IMR-90 (cell line): ENCODE measurements at regions of chr22 and their contacts with region 1.

Region 1: DNA sequence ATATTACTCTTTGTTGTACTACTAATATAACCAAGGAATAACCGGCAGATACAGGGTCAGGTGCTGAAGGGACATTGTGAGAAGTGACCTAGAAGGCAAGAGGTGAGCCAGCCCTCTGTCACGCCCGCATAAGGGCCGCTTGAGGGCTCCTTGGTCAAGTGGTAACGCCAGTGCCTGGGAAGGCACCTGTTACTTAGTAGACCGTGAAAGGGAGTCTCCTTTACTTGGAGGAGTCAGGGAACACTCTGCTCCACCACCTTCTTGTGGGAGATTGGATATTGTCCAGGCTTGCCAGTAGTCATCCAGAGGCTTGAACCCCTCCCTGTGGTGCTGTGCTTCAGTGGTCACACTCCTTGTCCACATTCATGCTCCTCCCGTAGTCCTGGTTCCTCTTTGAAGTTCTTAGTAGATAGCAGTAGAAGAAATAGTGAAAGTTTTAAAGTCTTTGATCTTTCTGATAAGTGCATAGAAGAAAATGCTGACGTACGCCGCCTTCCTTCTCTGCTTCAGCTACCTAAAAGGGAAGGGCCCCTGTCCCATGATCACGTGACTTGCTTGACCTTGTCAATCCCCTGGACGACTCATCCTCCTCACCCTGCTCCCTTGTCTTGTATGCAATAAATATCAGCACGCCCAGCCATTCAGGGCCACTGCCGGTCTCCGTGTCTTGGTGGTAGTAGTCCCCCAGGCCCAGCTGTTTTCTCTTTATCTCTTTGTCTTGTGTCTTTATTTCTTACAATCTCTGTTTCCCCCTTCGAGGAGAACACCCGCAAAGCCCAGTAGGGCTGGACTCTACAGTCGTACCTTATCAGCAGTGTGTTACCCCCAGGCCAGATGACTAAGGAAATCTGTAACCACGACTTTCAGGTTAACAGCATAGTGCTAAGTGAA is 6.1 kb downstream of the NUP50 start:
- DNase-seq: peak; percentile 44
- ATAC-seq: no peak
- H3K4me3 ChIP-seq: no peak overlapping the region
- H3K27ac ChIP-seq: no peak overlapping the region; the same call in 1 of the 2 replicates
- H3K4me1 ChIP-seq: peaks cover 4% of the 10 kb centered on the region; the same call in 1 of the 2 replicates
- H3K27me3 ChIP-seq: no peaks in the 10 kb centered on the region
- CTCF ChIP-seq: no peak
- POLR2A ChIP-seq: no peak
- RAD21 ChIP-seq: no peak

Region 2: GRCh38 chr22:45181766-45182165 is 11.9 kb after region 1 on chr22:
- CTCF ChIA-PET with region 1: no interaction called
- POLR2A ChIA-PET with region 1: interaction called, 16 read pairs
- dilution Hi-C with region 1: no loop called
- in situ Hi-C with region 1: no loop called
- intact Hi-C with region 1: no loop called
- DNase-seq: no peak
- ATAC-seq: no peak
- H3K4me3 ChIP-seq: no peak overlapping the region
- H3K27ac ChIP-seq: no peak overlapping the region
- H3K4me1 ChIP-seq: no peaks in the 10 kb centered on the region
- H3K27me3 ChIP-seq: no peaks in the 10 kb centered on the region
- CTCF ChIP-seq: no peak
- POLR2A ChIP-seq: no peak
- RAD21 ChIP-seq: no peak

Region 3: DNA sequence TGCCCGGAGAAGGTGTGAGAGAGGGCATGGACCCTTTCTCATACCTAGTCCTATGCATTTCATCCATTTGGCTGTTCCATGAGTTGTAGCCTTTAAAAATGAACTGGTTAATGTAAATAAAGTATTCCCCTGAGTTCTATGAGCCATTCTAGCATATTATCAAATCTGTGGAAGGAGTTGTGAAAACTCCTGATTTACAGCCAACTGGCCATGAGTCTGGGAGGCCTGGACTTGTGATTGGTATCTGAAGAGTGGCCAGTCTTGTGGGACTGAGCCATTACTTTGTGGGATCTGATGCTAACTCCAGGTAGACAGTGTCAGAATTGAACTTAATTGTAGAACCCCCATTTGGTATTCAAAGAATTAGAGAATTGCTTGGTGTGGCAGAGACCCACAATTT is 188.3 kb after region 1 on chr22:
- CTCF ChIA-PET with region 1: no interaction called
- POLR2A ChIA-PET with region 1: no interaction called
- dilution Hi-C with region 1: no loop called
- in situ Hi-C with region 1: no loop called
- intact Hi-C with region 1: no loop called
- DNase-seq: no peak
- ATAC-seq: no peak
- H3K4me3 ChIP-seq: no peak overlapping the region
- H3K27ac ChIP-seq: no peak overlapping the region
- H3K4me1 ChIP-seq: no peaks in the 10 kb centered on the region
- H3K27me3 ChIP-seq: peaks cover 13% of the 10 kb centered on the region
- CTCF ChIP-seq: no peak
- POLR2A ChIP-seq: no peak
- RAD21 ChIP-seq: no peak